CD8-positive, alpha-beta T cell (primary cell): ENCODE measurements at regions of chr3 and their contacts with region 1.

Region 1: DNA sequence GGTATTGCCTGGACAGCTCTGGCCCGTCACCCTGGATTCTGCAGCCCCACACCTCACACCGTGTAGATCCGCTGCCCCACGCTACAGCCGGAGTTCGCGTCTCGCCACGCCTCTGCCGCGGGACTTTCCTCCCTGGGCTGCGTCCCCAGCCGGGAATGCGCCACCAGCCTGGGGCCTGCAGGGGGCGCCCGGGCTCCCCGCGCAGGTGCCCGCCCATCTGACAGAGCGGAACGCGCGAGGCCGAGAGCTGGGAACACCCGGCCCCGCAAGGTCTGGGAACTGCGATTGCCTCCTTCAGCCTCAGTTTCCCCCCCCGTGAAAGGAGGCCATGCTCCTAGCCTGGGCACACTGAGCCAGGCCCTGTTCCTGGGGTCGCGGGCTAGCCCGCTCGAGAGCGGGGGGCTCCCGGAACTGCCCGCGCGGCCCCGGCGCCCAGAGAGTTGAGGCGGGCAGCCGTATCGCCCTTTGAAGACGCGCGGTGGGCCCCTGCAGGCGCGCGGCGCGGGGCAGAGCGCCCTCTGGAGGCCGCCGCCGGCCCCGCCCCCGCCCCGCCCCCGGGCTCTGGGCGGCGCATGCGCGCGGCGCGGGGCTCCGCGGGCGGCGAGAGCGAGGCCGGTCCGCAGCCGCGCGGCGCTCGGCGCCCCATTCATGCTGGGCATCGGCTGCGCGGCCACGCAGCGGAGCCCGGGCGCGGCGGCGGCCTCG is at the start of gene PLXNA1:
- DNase-seq: peak; percentile 81 to 95 (median 83)
- ATAC-seq: peak; percentile 81
- H3K4me3 ChIP-seq: peak within 1 kb of the TSS; percentile 57 to 69
- H3K4me3 Mint-ChIP-seq: peak within 1 kb of the TSS; percentile 85
- H3K27ac ChIP-seq: peak within 1 kb of the TSS; percentile 71 to 90
- H3K27ac Mint-ChIP-seq: peak within 1 kb of the TSS; percentile 94
- H3K4me1 ChIP-seq: peaks cover 19% of the 10 kb centered on the region
- H3K4me1 Mint-ChIP-seq: peaks cover 12% of the 10 kb centered on the region
- H3K27me3 ChIP-seq: peaks cover 0 to 2% of the 10 kb centered on the region in 2 experiments
- H3K27me3 Mint-ChIP-seq: peaks cover 14% of the 10 kb centered on the region
- CTCF ChIP-seq: peak; percentile 92
- total RNA-seq, gene PLXNA1: 7.3 to 8.4 TPM

Region 2: DNA sequence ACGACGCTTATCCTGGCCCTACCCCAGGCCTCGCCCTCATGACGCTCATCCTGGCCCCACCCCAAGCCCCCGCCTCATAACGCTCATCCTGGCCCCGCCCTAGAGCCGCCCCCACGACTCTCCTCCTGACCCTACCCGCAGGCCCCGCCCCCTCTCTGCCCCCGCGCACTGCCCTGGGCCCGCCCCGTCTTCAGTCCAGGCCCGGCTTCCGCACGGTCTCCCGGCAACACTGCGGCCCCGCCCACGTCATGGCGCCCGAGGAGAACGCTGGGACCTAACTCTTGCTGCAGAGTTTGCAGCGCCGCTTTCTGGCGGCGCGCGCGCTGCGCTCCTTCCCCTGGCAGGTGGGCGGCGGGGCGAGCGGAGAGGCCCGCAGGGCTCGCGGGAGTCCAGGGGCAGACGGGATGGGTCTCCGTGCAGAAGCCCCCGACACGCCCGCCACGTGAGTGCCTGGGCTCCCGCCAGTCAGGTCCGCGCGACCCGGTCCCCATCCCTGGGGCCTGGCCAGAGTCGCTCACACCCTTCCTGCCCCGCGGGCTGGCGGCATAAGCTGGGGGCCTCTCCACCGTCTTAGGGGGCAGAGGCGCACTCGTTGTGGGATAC is 1066.1 kb before region 1 on chr3:
- CTCF ChIA-PET with region 1: no interaction called
- POLR2A ChIA-PET with region 1: no interaction called
- intact Hi-C with region 1: loop called (anchors 5 kb)
- DNase-seq: peak; percentile 89 to 98 (median 94)
- ATAC-seq: peak; percentile 94
- H3K4me3 ChIP-seq: peak overlapping the region; percentile 61 to 81
- H3K4me3 Mint-ChIP-seq: peak overlapping the region; percentile 90
- H3K27ac ChIP-seq: peak overlapping the region; percentile 74 to 84
- H3K27ac Mint-ChIP-seq: peak overlapping the region; percentile 96
- H3K4me1 ChIP-seq: peaks cover 6% of the 10 kb centered on the region
- H3K4me1 Mint-ChIP-seq: peaks cover 19% of the 10 kb centered on the region
- H3K27me3 ChIP-seq: no peaks in the 10 kb centered on the region
- H3K27me3 Mint-ChIP-seq: no peaks in the 10 kb centered on the region
- CTCF ChIP-seq: peak; percentile 18

Region 3: GRCh38 chr3:126475413-126476114 is 507.1 kb before region 1 on chr3 and contains the start of gene ZXDC:
- CTCF ChIA-PET with region 1: no interaction called
- POLR2A ChIA-PET with region 1: no interaction called
- intact Hi-C with region 1: loop called (anchors 2 kb)
- DNase-seq: peak; percentile 85 to 97 (median 92)
- ATAC-seq: peak; percentile 81
- H3K4me3 ChIP-seq: peak within 1 kb of the TSS; percentile 68 to 72
- H3K4me3 Mint-ChIP-seq: peak within 1 kb of the TSS; percentile 88
- H3K27ac ChIP-seq: peak within 1 kb of the TSS; percentile 72 to 84
- H3K27ac Mint-ChIP-seq: peak within 1 kb of the TSS; percentile 89
- H3K4me1 ChIP-seq: peaks cover 37% of the 10 kb centered on the region
- H3K4me1 Mint-ChIP-seq: peaks cover 46% of the 10 kb centered on the region
- H3K27me3 ChIP-seq: no peaks in the 10 kb centered on the region
- H3K27me3 Mint-ChIP-seq: no peaks in the 10 kb centered on the region
- CTCF ChIP-seq: peak; percentile 25
- total RNA-seq, gene ZXDC: 60.7 to 62.8 TPM

Region 4: DNA sequence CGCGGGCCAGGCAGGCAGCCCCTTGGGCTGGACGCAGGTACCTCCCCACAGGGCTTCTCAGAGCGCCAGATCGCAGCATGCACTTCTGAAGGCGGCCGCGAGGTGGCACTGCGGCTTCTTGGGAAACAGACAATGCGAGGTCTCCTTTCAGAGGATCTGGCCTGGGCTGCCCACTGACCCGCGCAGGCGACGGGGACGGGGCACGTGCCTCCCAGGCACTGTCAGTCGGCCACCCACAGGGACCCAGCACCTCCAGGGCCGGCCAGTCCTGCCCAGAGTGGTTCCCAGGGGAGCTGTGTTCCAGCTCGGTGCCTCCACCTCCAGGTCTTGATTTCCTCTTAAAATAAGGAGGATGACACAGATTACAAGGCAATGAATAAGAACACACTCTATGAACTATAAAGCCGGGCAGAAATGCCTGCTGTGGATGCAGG is 303.3 kb before region 1 on chr3:
- CTCF ChIA-PET with region 1: interaction called, 5 read pairs
- POLR2A ChIA-PET with region 1: no interaction called
- intact Hi-C with region 1: loop called in 1 of 2 experiments (anchors 1 kb)
- DNase-seq: peak; percentile 61 to 86 (median 75)
- ATAC-seq: peak; percentile 90
- H3K4me3 ChIP-seq: peak overlapping the region in 1 of 2 experiments; percentile 7
- H3K4me3 Mint-ChIP-seq: peak overlapping the region; percentile 37
- H3K27ac ChIP-seq: no peak overlapping the region
- H3K27ac Mint-ChIP-seq: no peak overlapping the region
- H3K4me1 ChIP-seq: peaks cover 3% of the 10 kb centered on the region
- H3K4me1 Mint-ChIP-seq: peaks cover 3% of the 10 kb centered on the region
- H3K27me3 ChIP-seq: no peaks in the 10 kb centered on the region
- H3K27me3 Mint-ChIP-seq: peaks cover 6% of the 10 kb centered on the region
- CTCF ChIP-seq: peak; percentile 96

Region 5: GRCh38 chr3:127544192-127544802 is 561.7 kb after region 1 on chr3:
- CTCF ChIA-PET with region 1: no interaction called
- POLR2A ChIA-PET with region 1: no interaction called
- intact Hi-C with region 1: loop called (anchors 5 to 10 kb)
- DNase-seq: peak; percentile 26 to 77 (median 66)
- ATAC-seq: peak; percentile 44
- H3K4me3 ChIP-seq: no peak overlapping the region
- H3K4me3 Mint-ChIP-seq: no peak overlapping the region
- H3K27ac ChIP-seq: no peak overlapping the region
- H3K27ac Mint-ChIP-seq: no peak overlapping the region
- H3K4me1 ChIP-seq: peaks cover 11% of the 10 kb centered on the region
- H3K4me1 Mint-ChIP-seq: peaks cover 11% of the 10 kb centered on the region
- H3K27me3 ChIP-seq: no peaks in the 10 kb centered on the region
- H3K27me3 Mint-ChIP-seq: no peaks in the 10 kb centered on the region
- CTCF ChIP-seq: peak; percentile 80

Region 6: DNA sequence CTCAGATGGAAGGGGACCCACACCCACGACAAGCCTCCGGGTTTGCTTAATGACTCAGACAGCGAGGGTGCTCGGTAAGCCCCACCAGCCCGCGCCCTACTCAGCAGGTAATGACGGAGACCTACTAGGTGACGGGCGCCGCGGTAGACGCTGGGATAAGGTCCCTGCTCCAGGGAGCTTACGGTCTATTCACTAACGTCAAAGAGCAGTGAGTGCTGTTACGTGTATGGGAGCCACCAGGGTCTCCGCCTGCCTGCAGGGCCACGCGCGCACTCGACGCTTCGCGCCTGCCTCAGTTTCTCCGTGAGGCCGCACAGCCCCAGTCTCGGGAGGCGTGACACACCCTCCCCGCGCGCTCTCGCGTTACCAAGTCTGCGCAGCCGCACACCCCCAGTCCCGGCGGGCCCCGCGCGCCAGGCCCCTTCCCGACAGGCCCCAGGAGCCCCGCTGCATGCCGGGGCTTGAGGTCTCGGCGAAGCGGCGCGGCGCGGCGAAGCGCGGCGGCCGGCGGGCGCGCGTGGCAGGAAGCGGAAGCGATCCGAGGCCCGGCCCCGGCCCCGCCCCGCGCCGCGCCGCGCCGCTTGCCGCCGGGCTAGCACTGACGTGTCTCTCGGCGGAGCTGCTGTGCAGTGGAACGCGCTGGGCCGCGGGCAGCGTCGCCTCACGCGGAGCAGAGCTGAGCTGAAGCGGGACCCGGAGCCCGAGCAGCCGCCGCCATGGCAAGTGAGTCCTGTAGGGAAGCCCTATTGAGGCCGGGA is 1069.4 kb after region 1 on chr3 and contains the start of gene SEC61A1:
- CTCF ChIA-PET with region 1: no interaction called
- POLR2A ChIA-PET with region 1: no interaction called
- intact Hi-C with region 1: loop called (anchors 2 to 10 kb)
- DNase-seq: peak; percentile 87 to 97 (median 95)
- ATAC-seq: peak; percentile 93
- H3K4me3 ChIP-seq: peak within 1 kb of the TSS; percentile 92 to 95
- H3K4me3 Mint-ChIP-seq: peak within 1 kb of the TSS; percentile 99
- H3K27ac ChIP-seq: peak within 1 kb of the TSS; percentile 78 to 85
- H3K27ac Mint-ChIP-seq: peak within 1 kb of the TSS; percentile 98
- H3K4me1 ChIP-seq: peaks cover 35% of the 10 kb centered on the region
- H3K4me1 Mint-ChIP-seq: peaks cover 43% of the 10 kb centered on the region
- H3K27me3 ChIP-seq: no peaks in the 10 kb centered on the region
- H3K27me3 Mint-ChIP-seq: no peaks in the 10 kb centered on the region
- CTCF ChIP-seq: no peak
- total RNA-seq, gene SEC61A1: 125 to 131 TPM